ENCODE measurements at regions of chrX and their contacts with region 1.

Region 1: DNA sequence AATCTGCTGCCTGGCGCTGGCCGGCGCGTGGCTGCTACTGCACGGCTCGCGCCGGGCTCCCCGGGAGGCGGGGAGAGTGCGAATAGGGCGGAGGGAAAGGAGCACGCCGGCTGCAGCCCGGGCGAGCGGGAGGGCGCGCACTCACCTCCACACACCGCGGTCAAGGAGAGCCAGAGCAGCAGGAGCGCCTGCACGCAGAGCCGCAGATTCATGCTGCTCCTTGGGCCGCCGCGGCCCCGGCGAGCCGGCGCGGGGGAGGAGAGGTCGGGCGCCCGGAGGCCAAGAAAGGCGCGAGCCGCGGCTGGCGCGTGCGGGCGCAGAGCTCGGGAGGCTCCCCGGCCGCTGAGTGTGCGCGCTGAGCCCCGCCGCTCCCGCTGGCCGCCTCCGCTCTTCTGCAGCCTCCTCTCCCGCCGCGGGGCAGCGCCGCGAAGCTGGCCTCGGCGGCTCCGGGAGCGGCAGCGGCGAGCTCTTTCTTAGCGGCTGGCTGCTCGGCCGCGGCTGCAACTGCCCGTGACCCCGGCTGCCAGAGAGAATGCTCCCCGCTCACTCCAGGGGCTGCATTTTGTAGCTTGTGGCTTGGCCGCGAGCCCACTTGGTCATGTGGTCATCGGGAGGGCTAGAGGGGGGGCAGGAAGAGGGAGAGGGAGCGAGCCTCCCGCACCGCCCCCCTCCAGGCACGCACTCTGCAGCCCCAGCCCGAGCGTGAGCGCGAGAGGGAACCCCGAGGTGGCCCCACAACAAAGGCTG is at the start of gene APLN:
- DNase-seq: peak in 1 of 2 experiments; percentile 47
- H3K4me3 ChIP-seq: peak within 1 kb of the TSS; percentile 51
- H3K4me3 Mint-ChIP-seq: peak within 1 kb of the TSS; percentile 75
- H3K27ac Mint-ChIP-seq: no peak within 1 kb of the TSS
- H3K4me1 ChIP-seq: no peaks in the 10 kb centered on the region
- H3K4me1 Mint-ChIP-seq: no peaks in the 10 kb centered on the region
- H3K27me3 ChIP-seq: no peaks in the 10 kb centered on the region
- H3K27me3 Mint-ChIP-seq: peaks cover 4% of the 10 kb centered on the region
- CTCF ChIP-seq: no peak
- total RNA-seq, gene APLN: 0.09 and 0.20 TPM in 2 replicates

Region 2: GRCh38 chrX:129427267-129427666 is 227.3 kb before region 1 on chrX:
- CTCF ChIA-PET with region 1: no interaction called
- POLR2A ChIA-PET with region 1: no interaction called
- intact Hi-C with region 1: no loop called
- DNase-seq: no peak
- H3K4me3 ChIP-seq: no peak overlapping the region
- H3K4me3 Mint-ChIP-seq: no peak overlapping the region
- H3K27ac Mint-ChIP-seq: no peak overlapping the region
- H3K4me1 ChIP-seq: no peaks in the 10 kb centered on the region
- H3K4me1 Mint-ChIP-seq: no peaks in the 10 kb centered on the region
- H3K27me3 ChIP-seq: no peaks in the 10 kb centered on the region
- H3K27me3 Mint-ChIP-seq: no peaks in the 10 kb centered on the region
- CTCF ChIP-seq: no peak

Region 3: DNA sequence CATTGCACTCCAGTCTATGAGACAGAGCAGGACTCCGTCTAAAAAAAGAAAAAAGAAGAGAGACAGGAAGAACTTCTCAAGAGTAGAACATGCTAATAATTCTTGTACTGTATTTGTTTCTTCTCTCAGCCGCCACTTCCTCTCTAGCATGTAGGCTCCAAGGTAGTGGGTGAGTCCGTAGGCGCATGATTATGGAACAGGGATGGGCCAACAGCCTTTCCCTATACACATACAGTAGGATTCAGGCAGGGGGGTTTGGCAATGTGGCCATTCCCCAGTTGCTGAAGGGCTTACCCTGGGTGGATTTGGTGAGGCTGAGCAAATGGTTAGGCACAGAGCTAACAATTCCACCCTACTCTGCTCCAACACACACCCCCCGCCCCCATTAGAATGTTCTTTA is 35.2 kb after region 1 on chrX:
- CTCF ChIA-PET with region 1: interaction called, 13 read pairs
- POLR2A ChIA-PET with region 1: no interaction called
- intact Hi-C with region 1: no loop called
- DNase-seq: no peak
- H3K4me3 ChIP-seq: no peak overlapping the region
- H3K4me3 Mint-ChIP-seq: no peak overlapping the region
- H3K27ac Mint-ChIP-seq: no peak overlapping the region
- H3K4me1 ChIP-seq: no peaks in the 10 kb centered on the region
- H3K4me1 Mint-ChIP-seq: no peaks in the 10 kb centered on the region
- H3K27me3 ChIP-seq: no peaks in the 10 kb centered on the region
- H3K27me3 Mint-ChIP-seq: no peaks in the 10 kb centered on the region
- CTCF ChIP-seq: no peak

Region 4: GRCh38 chrX:129726307-129727111 is 71.9 kb after region 1 on chrX:
- CTCF ChIA-PET with region 1: interaction called, 20 read pairs
- POLR2A ChIA-PET with region 1: no interaction called
- intact Hi-C with region 1: loop called (anchors 1 kb)
- DNase-seq: peak; percentile 55 to 75
- H3K4me3 ChIP-seq: no peak overlapping the region
- H3K4me3 Mint-ChIP-seq: no peak overlapping the region
- H3K27ac Mint-ChIP-seq: no peak overlapping the region
- H3K4me1 ChIP-seq: no peaks in the 10 kb centered on the region
- H3K4me1 Mint-ChIP-seq: peaks cover 6% of the 10 kb centered on the region
- H3K27me3 ChIP-seq: no peaks in the 10 kb centered on the region
- H3K27me3 Mint-ChIP-seq: peaks cover 3% of the 10 kb centered on the region
- CTCF ChIP-seq: peak; percentile 55 to 77